CD8-positive, alpha-beta memory T cell (primary cell): ENCODE measurements at regions of chr11 and their contacts with region 1.

Region 1: DNA sequence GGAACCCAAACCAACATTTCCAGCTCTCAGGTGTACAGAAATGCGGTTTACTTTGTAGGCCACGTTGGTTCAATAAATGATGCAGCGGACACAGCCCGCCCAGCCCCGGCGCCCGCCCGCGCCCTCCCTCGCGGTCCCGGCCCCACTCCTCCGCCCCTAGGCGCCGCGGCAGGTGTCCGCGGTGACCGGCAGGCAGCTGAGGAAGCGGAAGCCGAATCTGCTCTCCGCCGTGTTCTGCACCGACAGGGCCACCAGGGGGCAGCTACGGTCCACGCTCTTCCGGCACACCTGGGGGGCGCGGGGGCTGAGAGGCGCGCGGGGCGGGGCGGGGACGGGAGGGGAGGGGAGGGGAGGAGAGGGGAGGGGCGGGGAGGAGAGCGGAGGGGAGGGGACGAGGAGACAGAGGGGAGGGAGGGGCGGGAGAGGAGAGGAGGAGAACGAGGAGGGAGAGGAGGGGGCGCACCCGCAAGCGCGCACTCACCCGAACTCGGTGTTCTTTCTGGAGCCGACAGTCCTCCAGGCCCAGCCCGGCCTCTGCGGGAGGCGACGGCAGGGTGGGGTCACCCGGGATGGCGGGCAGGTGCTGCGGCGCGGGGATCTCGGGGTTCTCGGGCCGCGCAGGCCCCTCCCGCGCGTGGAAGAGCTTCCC is 5.6 kb downstream of the LMNTD2 start:
- DNase-seq: peak; percentile 69 to 86 (median 70)
- H3K4me3 ChIP-seq: peak overlapping the region; percentile 45
- H3K4me3 Mint-ChIP-seq: peak overlapping the region in 6 of 7 donors; percentile 28 to 68 (median 58)
- H3K27ac ChIP-seq: no peak overlapping the region
- H3K27ac Mint-ChIP-seq: no peak overlapping the region
- H3K4me1 ChIP-seq: peaks cover 14% of the 10 kb centered on the region
- H3K4me1 Mint-ChIP-seq: peaks cover 3 to 14% (median 3%) of the 10 kb centered on the region in 3 donors
- H3K27me3 ChIP-seq: no peaks in the 10 kb centered on the region
- H3K27me3 Mint-ChIP-seq: no peaks in the 10 kb centered on the region

Region 2: DNA sequence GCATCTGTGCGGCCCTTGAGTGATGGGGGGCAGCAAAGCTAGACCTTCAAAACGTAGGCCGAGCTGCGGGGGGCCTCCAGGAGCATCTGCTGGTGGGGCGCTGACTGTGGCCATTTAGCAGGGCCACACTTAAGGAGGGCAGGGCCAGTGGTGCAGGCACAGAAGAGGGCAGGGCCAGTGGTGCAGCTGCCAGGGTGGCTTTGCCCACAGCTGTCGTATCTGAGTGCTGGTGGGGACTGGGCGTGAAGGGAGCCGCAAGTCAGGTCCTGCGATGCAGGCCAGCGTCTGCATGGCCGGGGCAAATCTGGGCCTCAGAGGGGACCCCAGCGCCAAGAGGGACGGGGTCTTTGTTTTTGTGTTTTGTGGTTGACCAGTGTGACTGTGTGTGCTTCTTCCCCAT is 75.6 kb before region 1 on chr11:
- CTCF ChIA-PET with region 1: no interaction called
- POLR2A ChIA-PET with region 1: no interaction called
- DNase-seq: no peak
- H3K4me3 ChIP-seq: no peak overlapping the region
- H3K4me3 Mint-ChIP-seq: no peak overlapping the region
- H3K27ac ChIP-seq: no peak overlapping the region
- H3K27ac Mint-ChIP-seq: peak overlapping the region in 1 of 8 donors; percentile 89
- H3K4me1 ChIP-seq: no peaks in the 10 kb centered on the region
- H3K4me1 Mint-ChIP-seq: no peaks in the 10 kb centered on the region
- H3K27me3 ChIP-seq: no peaks in the 10 kb centered on the region
- H3K27me3 Mint-ChIP-seq: no peaks in the 10 kb centered on the region

Region 3: GRCh38 chr11:565921-566509 is 11.1 kb after region 1 on chr11:
- CTCF ChIA-PET with region 1: interaction called, 17 read pairs
- POLR2A ChIA-PET with region 1: interaction called, 4 read pairs
- DNase-seq: no peak
- H3K4me3 ChIP-seq: no peak overlapping the region
- H3K4me3 Mint-ChIP-seq: peak overlapping the region in 1 of 7 donors; percentile 74
- H3K27ac ChIP-seq: no peak overlapping the region
- H3K27ac Mint-ChIP-seq: no peak overlapping the region
- H3K4me1 ChIP-seq: peaks cover 19% of the 10 kb centered on the region
- H3K4me1 Mint-ChIP-seq: peaks cover 5 to 18% (median 7%) of the 10 kb centered on the region in 3 donors
- H3K27me3 ChIP-seq: no peaks in the 10 kb centered on the region
- H3K27me3 Mint-ChIP-seq: peaks cover 0 to 2% of the 10 kb centered on the region in 2 donors